A673 (cell line): ENCODE measurements at regions of chr9 and their contacts with region 1.

Region 1: GRCh38 chr9:15510789-15511575 is at the start of gene PSIP1:
- DNase-seq: peak; percentile 77
- H3K4me3 ChIP-seq: peak within 1 kb of the TSS; percentile 79
- H3K27ac ChIP-seq: peak within 1 kb of the TSS; percentile 100
- H3K4me1 ChIP-seq: no peaks in the 10 kb centered on the region
- H3K27me3 ChIP-seq: no peaks in the 10 kb centered on the region
- CTCF ChIP-seq: no peak
- total RNA-seq, gene PSIP1: 70.0 and 78.5 TPM in 2 replicates

Region 2: DNA sequence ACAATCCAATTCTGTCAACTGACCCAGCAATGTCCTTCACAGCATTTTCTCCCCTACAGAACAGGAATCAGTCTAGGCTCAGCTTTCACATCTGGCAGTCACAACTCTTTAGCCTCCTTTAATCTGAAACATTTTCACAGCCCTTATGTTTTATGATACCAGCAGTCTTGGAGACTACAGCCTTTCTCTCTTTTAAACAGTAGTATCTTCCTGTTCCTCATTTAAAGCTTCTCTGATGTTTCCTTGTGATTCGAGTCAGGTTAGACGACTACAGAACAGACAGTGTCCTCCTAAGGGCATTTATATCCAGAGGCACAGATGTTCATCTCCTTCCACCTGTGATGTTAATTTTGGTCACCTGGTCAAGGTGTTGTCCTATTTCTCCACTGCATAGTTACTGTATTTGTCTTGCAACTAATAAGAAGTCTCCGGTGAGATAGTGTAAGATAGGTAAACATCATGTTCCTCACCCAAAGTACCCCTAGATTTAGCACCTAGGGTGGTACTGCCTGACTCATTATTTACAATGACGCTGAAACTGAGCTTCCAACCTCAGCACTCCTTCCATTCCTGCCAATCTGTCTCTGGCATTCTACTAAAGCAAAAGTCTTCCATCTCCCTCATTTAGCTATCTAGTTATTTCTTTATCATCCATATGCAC is 224.7 kb before region 1 on chr9:
- CTCF ChIA-PET with region 1: no interaction called
- POLR2A ChIA-PET with region 1: interaction called, 13 read pairs
- intact Hi-C with region 1: no loop called
- DNase-seq: no peak
- H3K4me3 ChIP-seq: no peak overlapping the region
- H3K27ac ChIP-seq: no peak overlapping the region
- H3K4me1 ChIP-seq: no peaks in the 10 kb centered on the region
- H3K27me3 ChIP-seq: no peaks in the 10 kb centered on the region
- CTCF ChIP-seq: no peak